GM10248 (cell line): ENCODE measurements at regions of chr9 and their contacts with region 1.

Region 1: GRCh38 chr9:35882263-35882848 is 12.2 kb upstream of the OR13J1 start:
- DNase-seq: peak; percentile 78
- CTCF ChIP-seq: peak; percentile 97

Region 2: DNA sequence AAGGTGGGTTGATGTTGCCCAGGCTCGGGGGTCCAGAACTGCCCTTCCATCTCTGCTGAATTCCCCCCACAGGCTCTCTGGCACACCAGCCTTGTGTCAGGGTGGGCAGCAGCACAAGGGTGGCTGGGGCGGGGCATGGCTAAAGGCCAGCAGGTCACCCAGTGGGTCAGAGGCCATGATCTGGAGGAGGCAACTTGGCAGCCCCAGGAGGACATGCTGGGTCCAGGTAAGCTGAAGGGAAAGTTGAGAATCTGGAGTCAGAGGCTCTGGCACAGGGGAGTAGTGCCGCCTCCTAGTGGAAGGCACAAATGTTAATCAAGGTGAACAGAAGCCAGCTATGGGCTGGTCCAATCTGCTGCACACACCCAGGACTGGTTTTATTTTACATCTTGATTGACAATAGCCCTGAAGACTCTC is 47.1 kb before region 1 on chr9:
- CTCF ChIA-PET with region 1: interaction called, 22 read pairs
- POLR2A ChIA-PET with region 1: no interaction called
- DNase-seq: no peak
- CTCF ChIP-seq: peak; percentile 13

Region 3: GRCh38 chr9:35859310-35859989 is 22.9 kb before region 1 on chr9:
- CTCF ChIA-PET with region 1: interaction called, 26 read pairs
- POLR2A ChIA-PET with region 1: no interaction called
- DNase-seq: no peak
- CTCF ChIP-seq: no peak

Region 4: GRCh38 chr9:35935755-35936509 is 53.6 kb after region 1 on chr9:
- CTCF ChIA-PET with region 1: no interaction called
- POLR2A ChIA-PET with region 1: no interaction called
- DNase-seq: no peak
- CTCF ChIP-seq: no peak

Region 5: GRCh38 chr9:36204906-36205547 is 322.7 kb after region 1 on chr9:
- CTCF ChIA-PET with region 1: no interaction called
- POLR2A ChIA-PET with region 1: no interaction called
- DNase-seq: no peak
- CTCF ChIP-seq: peak; percentile 11